Activated CD4-positive, alpha-beta memory T cell treated with anti-CD3 and anti-CD28 coated beads for 36 hours (primary cell): ENCODE measurements at regions of chr2 and their contacts with region 1.

Region 1: DNA sequence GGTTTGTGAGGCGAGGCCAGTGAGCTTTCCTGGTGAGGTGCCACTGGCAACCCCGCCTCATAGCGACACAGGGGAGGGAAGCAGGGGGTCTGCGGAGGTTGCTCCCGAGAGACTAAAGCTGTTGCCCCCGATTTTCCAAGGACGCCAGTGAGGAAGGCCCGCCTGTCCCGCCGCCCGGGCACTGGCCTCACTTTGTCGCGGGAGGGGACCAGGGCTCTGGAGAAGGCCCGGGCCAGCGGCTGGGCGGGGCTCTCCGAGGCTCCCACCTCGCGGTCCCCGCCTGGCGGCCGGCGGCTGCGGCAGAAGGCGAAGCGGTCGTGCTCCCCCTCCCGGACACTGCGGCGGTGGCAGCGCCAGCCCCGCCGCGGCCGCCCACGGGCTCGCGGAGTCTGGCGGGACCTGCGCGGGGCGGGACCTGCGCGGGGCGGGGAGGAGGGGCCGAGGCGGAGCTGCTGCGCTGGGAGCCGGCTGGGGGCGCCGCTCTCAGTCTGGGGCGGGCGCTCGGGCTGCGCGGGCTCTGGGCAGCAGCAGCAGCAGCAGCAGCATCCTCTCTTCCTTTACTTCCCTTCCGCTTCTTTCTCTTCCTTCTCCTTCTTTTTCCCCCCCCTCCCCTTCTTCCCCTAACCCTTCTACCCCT is at the start of gene MAP2:
- DNase-seq: peak; percentile 77
- H3K4me3 Mint-ChIP-seq: peak within 1 kb of the TSS; percentile 57
- H3K27ac Mint-ChIP-seq: no peak within 1 kb of the TSS
- H3K4me1 Mint-ChIP-seq: peaks cover 10% of the 10 kb centered on the region
- H3K27me3 Mint-ChIP-seq: peaks cover 25% of the 10 kb centered on the region
- total RNA-seq, gene MAP2: 0.07 to 0.27 TPM

Region 2: GRCh38 chr2:208407667-208408066 is 1016.0 kb before region 1 on chr2:
- CTCF ChIA-PET with region 1: no interaction called
- POLR2A ChIA-PET with region 1: no interaction called
- intact Hi-C with region 1: loop called (anchors 10 kb)
- DNase-seq: peak; percentile 15
- H3K4me3 Mint-ChIP-seq: no peak overlapping the region
- H3K27ac Mint-ChIP-seq: no peak overlapping the region
- H3K4me1 Mint-ChIP-seq: peaks cover 9% of the 10 kb centered on the region
- H3K27me3 Mint-ChIP-seq: peaks cover 50% of the 10 kb centered on the region

Region 3: GRCh38 chr2:209334198-209335017 is 89.3 kb before region 1 on chr2:
- CTCF ChIA-PET with region 1: interaction called, 8 read pairs
- POLR2A ChIA-PET with region 1: no interaction called
- intact Hi-C with region 1: loop called (anchors 2 kb)
- DNase-seq: peak; percentile 48
- H3K4me3 Mint-ChIP-seq: no peak overlapping the region
- H3K27ac Mint-ChIP-seq: no peak overlapping the region
- H3K4me1 Mint-ChIP-seq: no peaks in the 10 kb centered on the region
- H3K27me3 Mint-ChIP-seq: no peaks in the 10 kb centered on the region

Region 4: GRCh38 chr2:209358992-209359391 is 64.7 kb before region 1 on chr2:
- CTCF ChIA-PET with region 1: no interaction called
- POLR2A ChIA-PET with region 1: no interaction called
- intact Hi-C with region 1: no loop called
- DNase-seq: no peak
- H3K4me3 Mint-ChIP-seq: no peak overlapping the region
- H3K27ac Mint-ChIP-seq: no peak overlapping the region
- H3K4me1 Mint-ChIP-seq: no peaks in the 10 kb centered on the region
- H3K27me3 Mint-ChIP-seq: no peaks in the 10 kb centered on the region

Region 5: GRCh38 chr2:209577376-209578357 is 154.0 kb after region 1 on chr2:
- CTCF ChIA-PET with region 1: interaction called, 3 read pairs
- POLR2A ChIA-PET with region 1: no interaction called
- intact Hi-C with region 1: loop called (anchors 5 kb)
- DNase-seq: no peak
- H3K4me3 Mint-ChIP-seq: no peak overlapping the region
- H3K27ac Mint-ChIP-seq: no peak overlapping the region
- H3K4me1 Mint-ChIP-seq: no peaks in the 10 kb centered on the region
- H3K27me3 Mint-ChIP-seq: no peaks in the 10 kb centered on the region